Activated T-helper 1 cell treated with anti-CD3 and anti-CD28 coated beads, Interleukin-12 subunit alpha, Interleukin-12 subunit beta, Interleukin-2, Interleukin-4 antibody, amounts not matched to agents 30 ng/mL and 10 ng/mL and 1 ng/mL, durations not matched to agents 14 hours and 24 hours and 36 hours (primary cell): ENCODE measurements at regions of chr2 and their contacts with region 1.

Region 1: DNA sequence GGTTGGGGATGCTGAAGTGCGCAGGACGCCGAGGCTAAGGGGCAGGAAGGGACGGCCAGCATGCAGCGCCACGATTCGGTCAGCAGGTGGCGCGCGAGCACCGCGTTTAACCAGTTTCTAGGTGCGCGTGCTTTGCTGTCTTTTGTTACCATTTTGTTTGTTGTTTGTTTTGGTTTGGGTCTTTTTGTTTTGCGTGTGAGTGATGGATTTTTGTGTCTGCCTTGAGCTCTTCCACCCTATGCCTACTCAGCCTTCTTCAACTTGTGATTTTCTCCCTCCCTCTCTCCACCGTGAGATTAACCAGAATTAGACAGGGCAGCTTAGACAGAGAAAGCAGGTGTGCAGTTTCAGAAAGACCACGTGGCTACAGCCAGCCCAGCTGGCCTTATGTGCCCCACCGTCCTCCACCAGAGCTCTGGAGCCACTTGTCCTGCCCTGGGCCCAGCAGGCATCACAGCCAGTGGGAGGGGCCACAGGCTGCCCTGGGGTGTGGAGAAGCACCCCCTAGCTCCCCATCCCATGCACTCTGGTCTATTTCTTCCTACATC is 180.2 kb downstream of the RNF144A start:
- DNase-seq: peak; percentile 56
- H3K4me3 Mint-ChIP-seq: peak overlapping the region; percentile 57
- H3K27ac Mint-ChIP-seq: peak overlapping the region; percentile 4
- H3K4me1 Mint-ChIP-seq: peaks cover 9% of the 10 kb centered on the region
- H3K27me3 Mint-ChIP-seq: no peaks in the 10 kb centered on the region

Region 2: GRCh38 chr2:8004250-8004681 is 906.8 kb after region 1 on chr2:
- intact Hi-C with region 1: no loop called
- DNase-seq: no peak
- H3K4me3 Mint-ChIP-seq: no peak overlapping the region
- H3K27ac Mint-ChIP-seq: no peak overlapping the region
- H3K4me1 Mint-ChIP-seq: peaks cover 10% of the 10 kb centered on the region
- H3K27me3 Mint-ChIP-seq: peaks cover 2% of the 10 kb centered on the region

Region 3: GRCh38 chr2:8761529-8762164 is 1664.2 kb after region 1 on chr2:
- intact Hi-C with region 1: loop called (anchors 1 kb)
- DNase-seq: no peak
- H3K4me3 Mint-ChIP-seq: no peak overlapping the region
- H3K27ac Mint-ChIP-seq: no peak overlapping the region
- H3K4me1 Mint-ChIP-seq: no peaks in the 10 kb centered on the region
- H3K27me3 Mint-ChIP-seq: no peaks in the 10 kb centered on the region